HEK293 (cell line): ENCODE measurements at regions of chr12 and their contacts with region 1.

Region 1: DNA sequence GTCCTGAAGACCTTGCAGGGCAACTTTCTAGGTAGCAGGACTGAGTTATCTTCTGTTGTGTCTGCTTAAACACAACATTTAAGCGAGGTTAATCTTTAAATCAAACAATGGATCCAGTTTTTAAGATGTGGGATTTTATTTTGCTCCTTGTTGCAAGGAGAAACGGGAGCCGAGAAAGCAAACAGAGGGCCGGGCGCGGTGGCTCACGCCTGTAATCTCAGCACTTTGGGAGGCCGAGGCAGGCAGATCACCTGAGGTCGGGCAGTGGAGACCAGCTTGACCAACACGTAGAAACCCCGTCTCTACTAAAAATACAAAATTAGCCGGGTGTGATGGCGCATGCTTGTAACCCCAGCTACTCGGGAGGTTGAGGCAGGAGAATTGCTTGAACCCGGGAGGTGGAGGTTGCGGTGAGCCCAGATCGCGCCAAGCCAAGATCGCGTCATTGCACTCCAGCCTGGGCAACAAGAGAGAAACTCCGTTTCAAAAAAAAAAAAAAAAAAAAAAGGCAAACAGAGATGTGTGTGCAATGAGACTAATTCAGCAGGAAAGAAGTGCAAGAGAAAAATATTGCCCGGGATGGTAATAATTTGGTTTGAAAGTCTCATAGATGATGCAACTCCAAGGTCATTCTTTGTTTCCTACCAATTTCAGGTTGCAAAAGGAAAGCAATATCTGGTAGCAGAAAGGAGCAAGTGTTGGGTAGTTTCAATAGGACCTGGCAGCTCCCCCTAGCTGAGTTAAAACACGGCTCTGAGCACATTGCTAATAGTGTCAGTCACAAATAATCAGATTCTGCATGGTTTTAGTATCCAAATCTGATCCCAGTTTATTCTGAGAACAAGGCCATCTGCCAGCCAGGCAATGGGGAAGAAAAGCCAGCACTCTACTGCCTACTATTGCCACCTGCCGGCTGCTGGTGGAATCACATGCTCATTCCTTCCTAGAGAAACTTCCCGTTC is 141.4 kb downstream of the PPM1H start:
- H3K4me3 ChIP-seq: no peak overlapping the region
- H3K27ac ChIP-seq: no peak overlapping the region
- H3K4me1 ChIP-seq: no peaks in the 10 kb centered on the region; the same call in 1 of the 2 replicates
- CTCF ChIP-seq: peak; percentile 76

Region 2: GRCh38 chr12:62581288-62582064 is 212.1 kb before region 1 on chr12:
- CTCF ChIA-PET with region 1: interaction called, 58 read pairs
- POLR2A ChIA-PET with region 1: no interaction called
- H3K4me3 ChIP-seq: no peak overlapping the region
- H3K27ac ChIP-seq: no peak overlapping the region
- H3K4me1 ChIP-seq: no peaks in the 10 kb centered on the region
- CTCF ChIP-seq: no peak

Region 3: DNA sequence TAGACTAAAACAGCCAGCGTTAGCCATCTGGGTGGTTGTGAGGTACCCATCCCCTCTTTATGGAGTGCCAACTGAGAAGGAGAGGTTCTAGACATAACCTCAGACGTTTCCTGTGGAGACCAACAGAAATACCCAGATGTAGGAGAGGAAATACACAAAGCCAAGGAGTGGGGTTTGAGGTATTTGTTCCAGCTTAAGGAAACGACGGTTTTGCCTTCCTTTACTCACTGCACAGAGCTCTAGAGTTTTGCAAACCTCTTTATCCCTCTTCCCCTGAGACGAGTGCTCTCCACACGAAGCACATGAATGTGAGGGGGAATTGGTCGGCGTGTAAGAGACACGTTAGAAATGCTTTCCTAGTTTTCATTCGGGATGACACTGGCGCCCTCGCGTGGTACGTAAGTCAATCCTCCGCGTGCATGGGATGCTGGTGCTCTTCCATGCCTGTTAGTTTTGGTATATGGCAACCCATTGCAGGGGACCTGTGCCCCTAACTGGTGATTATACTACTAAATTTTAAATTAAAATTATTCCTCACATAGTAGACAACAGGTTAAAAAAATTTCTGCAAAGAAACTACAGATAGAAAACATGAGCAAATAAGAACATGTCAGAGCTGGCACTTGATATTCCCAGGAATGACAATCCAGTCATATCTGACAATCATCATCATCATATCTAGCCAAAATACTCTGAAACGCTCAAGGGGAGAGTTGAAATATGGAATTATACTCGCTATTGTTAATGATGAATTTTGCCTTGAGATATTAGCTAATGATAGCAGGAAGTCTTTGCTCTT is 19.7 kb after region 1 on chr12:
- CTCF ChIA-PET with region 1: interaction called, 21 read pairs
- POLR2A ChIA-PET with region 1: no interaction called
- H3K4me3 ChIP-seq: no peak overlapping the region
- H3K27ac ChIP-seq: no peak overlapping the region
- H3K4me1 ChIP-seq: peaks cover 6% of the 10 kb centered on the region
- CTCF ChIP-seq: peak; percentile 35; the same call in 1 of the 2 replicates

Region 4: GRCh38 chr12:62995097-62995496 is 201.6 kb after region 1 on chr12:
- CTCF ChIA-PET with region 1: no interaction called
- POLR2A ChIA-PET with region 1: no interaction called
- H3K4me3 ChIP-seq: no peak overlapping the region
- H3K27ac ChIP-seq: no peak overlapping the region
- H3K4me1 ChIP-seq: no peaks in the 10 kb centered on the region
- CTCF ChIP-seq: no peak